ENCODE measurements at regions of chr18 and their contacts with region 1.

Region 1: GRCh38 chr18:8998481-8999217 is 103.8 kb upstream of the NDUFV2 start:
- DNase-seq: peak in 1 of 2 experiments; percentile 42
- H3K4me3 ChIP-seq: no peak overlapping the region
- H3K4me3 Mint-ChIP-seq: peak overlapping the region; percentile 12
- H3K27ac Mint-ChIP-seq: peak overlapping the region; percentile 43
- H3K4me1 ChIP-seq: peaks cover 28% of the 10 kb centered on the region
- H3K4me1 Mint-ChIP-seq: peaks cover 34% of the 10 kb centered on the region
- H3K27me3 ChIP-seq: no peaks in the 10 kb centered on the region
- H3K27me3 Mint-ChIP-seq: no peaks in the 10 kb centered on the region
- CTCF ChIP-seq: no peak

Region 2: GRCh38 chr18:8882632-8883408 is 115.8 kb before region 1 on chr18:
- CTCF ChIA-PET with region 1: no interaction called
- POLR2A ChIA-PET with region 1: no interaction called
- intact Hi-C with region 1: no loop called
- DNase-seq: peak; percentile 54 to 59
- H3K4me3 ChIP-seq: no peak overlapping the region
- H3K4me3 Mint-ChIP-seq: no peak overlapping the region
- H3K27ac Mint-ChIP-seq: no peak overlapping the region
- H3K4me1 ChIP-seq: no peaks in the 10 kb centered on the region
- H3K4me1 Mint-ChIP-seq: no peaks in the 10 kb centered on the region
- H3K27me3 ChIP-seq: no peaks in the 10 kb centered on the region
- H3K27me3 Mint-ChIP-seq: no peaks in the 10 kb centered on the region
- CTCF ChIP-seq: peak in 1 of 2 experiments; percentile 38

Region 3: DNA sequence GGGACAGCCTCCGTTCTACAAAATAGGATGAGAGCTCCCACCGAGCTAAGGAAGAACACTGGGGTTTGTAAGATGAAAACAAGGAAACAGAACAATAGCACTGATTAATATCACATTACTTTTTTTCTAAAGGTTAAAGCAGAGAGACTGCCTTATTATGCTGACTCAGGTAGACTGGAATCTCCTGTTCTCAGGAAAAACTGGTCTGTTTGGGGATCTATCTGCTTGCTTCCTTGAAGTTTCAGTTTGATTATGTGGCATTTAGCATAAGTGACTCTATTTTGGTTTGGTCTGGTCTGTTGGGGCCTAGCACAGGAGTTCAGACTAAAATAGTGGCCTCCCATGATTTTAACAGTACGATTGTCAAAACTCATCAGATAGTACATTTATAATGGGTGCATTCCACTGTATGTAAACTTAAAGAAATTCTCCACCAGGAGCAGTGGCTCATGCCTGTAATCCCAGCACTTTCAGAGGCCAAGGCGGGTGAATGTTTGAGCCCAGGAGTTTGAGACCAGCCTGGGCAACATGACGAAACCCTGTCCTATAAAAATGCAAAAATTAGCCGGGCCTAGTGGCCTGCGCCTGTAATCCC is 39.7 kb after region 1 on chr18:
- CTCF ChIA-PET with region 1: no interaction called
- POLR2A ChIA-PET with region 1: no interaction called
- intact Hi-C with region 1: loop called (anchors 1 kb)
- DNase-seq: peak in 1 of 2 experiments; percentile 10
- H3K4me3 ChIP-seq: no peak overlapping the region
- H3K4me3 Mint-ChIP-seq: no peak overlapping the region
- H3K27ac Mint-ChIP-seq: peak overlapping the region; percentile 61
- H3K4me1 ChIP-seq: peaks cover 28% of the 10 kb centered on the region
- H3K4me1 Mint-ChIP-seq: peaks cover 19% of the 10 kb centered on the region
- H3K27me3 ChIP-seq: no peaks in the 10 kb centered on the region
- H3K27me3 Mint-ChIP-seq: no peaks in the 10 kb centered on the region
- CTCF ChIP-seq: no peak

Region 4: DNA sequence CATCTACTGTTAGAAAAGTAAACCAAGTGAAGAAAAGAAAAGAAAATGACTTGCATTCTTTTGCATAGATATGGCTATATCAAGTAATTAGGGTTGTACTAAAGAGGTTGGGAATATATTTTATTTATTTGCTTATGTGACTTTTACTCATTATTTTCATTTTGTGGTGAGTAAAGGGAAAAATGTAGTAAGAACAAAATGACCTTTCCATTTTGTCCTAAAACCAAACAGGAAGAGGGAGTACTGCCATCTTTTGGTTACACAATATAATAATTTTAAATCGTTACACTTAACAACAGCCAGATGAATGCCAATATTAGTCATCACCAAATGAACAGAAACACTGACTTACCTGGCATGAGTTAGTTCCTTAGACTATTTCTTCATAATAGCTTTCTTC is 56.5 kb after region 1 on chr18:
- CTCF ChIA-PET with region 1: no interaction called
- POLR2A ChIA-PET with region 1: no interaction called
- intact Hi-C with region 1: loop called (anchors 5 kb)
- DNase-seq: no peak
- H3K4me3 ChIP-seq: no peak overlapping the region
- H3K4me3 Mint-ChIP-seq: no peak overlapping the region
- H3K27ac Mint-ChIP-seq: no peak overlapping the region
- H3K4me1 ChIP-seq: peaks cover 9% of the 10 kb centered on the region
- H3K4me1 Mint-ChIP-seq: peaks cover 11% of the 10 kb centered on the region
- H3K27me3 ChIP-seq: no peaks in the 10 kb centered on the region
- H3K27me3 Mint-ChIP-seq: no peaks in the 10 kb centered on the region
- CTCF ChIP-seq: peak in 1 of 2 experiments; percentile 12

Region 5: DNA sequence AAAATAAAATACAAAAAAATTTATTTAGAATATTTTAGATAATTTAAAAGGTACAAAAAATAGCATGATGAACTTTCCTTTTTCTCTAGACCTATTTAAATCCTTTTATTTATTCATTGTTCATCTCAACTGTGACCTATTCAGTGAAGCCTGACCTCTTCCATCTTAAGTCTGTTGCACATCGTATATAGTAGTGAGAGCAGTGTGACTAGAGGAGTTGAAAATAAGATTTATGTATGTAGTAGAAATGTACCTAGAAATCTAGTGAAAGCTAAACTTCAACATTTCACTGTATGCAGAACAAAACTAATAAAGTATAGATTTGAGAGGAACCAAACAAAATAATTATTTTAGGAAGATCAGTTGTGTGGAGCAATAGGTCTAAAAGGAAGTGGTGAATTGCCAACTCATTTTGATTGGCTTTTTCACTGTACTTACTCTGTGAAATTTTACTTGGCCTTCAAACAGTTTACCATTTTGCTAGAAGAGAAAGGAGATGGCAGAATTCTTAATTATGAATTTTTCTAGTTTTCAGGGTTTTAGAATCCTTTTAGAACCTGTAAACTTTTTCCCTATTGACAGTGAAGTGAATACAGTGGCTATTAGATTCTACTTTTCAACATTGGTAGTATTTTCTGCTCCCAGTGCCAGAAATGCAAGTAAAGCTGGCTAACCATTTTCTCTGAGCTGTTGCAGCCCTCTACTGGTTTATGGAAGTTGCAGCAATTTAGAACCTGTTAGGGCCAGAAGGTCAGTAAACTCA is 149.0 kb after region 1 on chr18:
- CTCF ChIA-PET with region 1: no interaction called
- POLR2A ChIA-PET with region 1: no interaction called
- intact Hi-C with region 1: loop called (anchors 1 kb)
- DNase-seq: peak; percentile 48 to 62
- H3K4me3 ChIP-seq: no peak overlapping the region
- H3K4me3 Mint-ChIP-seq: no peak overlapping the region
- H3K27ac Mint-ChIP-seq: no peak overlapping the region
- H3K4me1 ChIP-seq: no peaks in the 10 kb centered on the region
- H3K4me1 Mint-ChIP-seq: no peaks in the 10 kb centered on the region
- H3K27me3 ChIP-seq: no peaks in the 10 kb centered on the region
- H3K27me3 Mint-ChIP-seq: no peaks in the 10 kb centered on the region
- CTCF ChIP-seq: peak; percentile 61 to 86